Vagina (tissue), 2 donors: ENCODE measurements at regions of chr10 and their contacts with region 1.

Region 1: GRCh38 chr10:10712155-10712704 is 305.4 kb upstream of the CELF2 start:
- DNase-seq: no peak
- H3K4me3 ChIP-seq: no peak overlapping the region
- H3K27ac ChIP-seq: no peak overlapping the region
- H3K4me1 ChIP-seq: no peaks in the 10 kb centered on the region
- H3K27me3 ChIP-seq: no peaks in the 10 kb centered on the region
- CTCF ChIP-seq: no peak
- POLR2A ChIP-seq: no peak

Region 2: DNA sequence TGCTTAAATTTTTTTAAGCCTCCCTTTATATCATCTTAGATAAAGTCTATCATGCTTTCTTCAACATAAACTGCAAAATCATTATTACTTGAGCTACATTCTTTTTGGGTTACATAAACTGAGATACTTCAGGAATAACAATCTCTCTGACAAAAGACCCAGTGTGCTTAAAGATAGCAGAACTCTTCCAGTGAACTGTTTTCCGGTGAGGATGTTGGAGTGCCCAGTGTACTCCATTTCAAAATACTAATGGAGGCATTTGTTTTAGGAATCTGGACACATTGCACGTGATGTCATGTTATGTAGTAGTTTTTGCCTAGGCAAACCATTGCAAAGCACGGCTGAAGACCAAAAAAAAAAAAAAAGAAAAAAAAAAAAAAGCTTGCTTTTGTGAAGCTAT is 82.7 kb before region 1 on chr10:
- intact Hi-C with region 1: loop called (anchors 2 kb)
- DNase-seq: no peak
- H3K4me3 ChIP-seq: no peak overlapping the region
- H3K27ac ChIP-seq: no peak overlapping the region
- H3K4me1 ChIP-seq: no peaks in the 10 kb centered on the region
- H3K27me3 ChIP-seq: no peaks in the 10 kb centered on the region
- CTCF ChIP-seq: no peak
- POLR2A ChIP-seq: no peak